ENCODE measurements at regions of chr17 and their contacts with region 1.

Region 1: GRCh38 chr17:58587702-58588254 is 73.3 kb upstream of the MTMR4 start:
- DNase-seq: peak; percentile 84
- ATAC-seq: peak; percentile 97
- H3K4me3 ChIP-seq: no peak overlapping the region
- H3K27ac ChIP-seq: no peak overlapping the region
- H3K4me1 ChIP-seq: no peaks in the 10 kb centered on the region
- H3K27me3 ChIP-seq: 0 out of 2 replicates have a peak, but pooled peaks cover 4% of the 10 kb centered on the region
- CTCF ChIP-seq: peak; percentile 98

Region 2: GRCh38 chr17:58658804-58659713 is 71.3 kb after region 1 on chr17:
- CTCF ChIA-PET with region 1: no interaction called
- POLR2A ChIA-PET with region 1: no interaction called
- intact Hi-C with region 1: loop called (anchors 1 kb)
- DNase-seq: peak; percentile 98
- ATAC-seq: peak; percentile 91
- H3K4me3 ChIP-seq: peak overlapping the region; percentile 56
- H3K27ac ChIP-seq: peak overlapping the region; percentile 89
- H3K4me1 ChIP-seq: 0 out of 2 replicates have a peak, but pooled peaks cover 8% of the 10 kb centered on the region
- H3K27me3 ChIP-seq: no peaks in the 10 kb centered on the region
- CTCF ChIP-seq: no peak

Region 3: DNA sequence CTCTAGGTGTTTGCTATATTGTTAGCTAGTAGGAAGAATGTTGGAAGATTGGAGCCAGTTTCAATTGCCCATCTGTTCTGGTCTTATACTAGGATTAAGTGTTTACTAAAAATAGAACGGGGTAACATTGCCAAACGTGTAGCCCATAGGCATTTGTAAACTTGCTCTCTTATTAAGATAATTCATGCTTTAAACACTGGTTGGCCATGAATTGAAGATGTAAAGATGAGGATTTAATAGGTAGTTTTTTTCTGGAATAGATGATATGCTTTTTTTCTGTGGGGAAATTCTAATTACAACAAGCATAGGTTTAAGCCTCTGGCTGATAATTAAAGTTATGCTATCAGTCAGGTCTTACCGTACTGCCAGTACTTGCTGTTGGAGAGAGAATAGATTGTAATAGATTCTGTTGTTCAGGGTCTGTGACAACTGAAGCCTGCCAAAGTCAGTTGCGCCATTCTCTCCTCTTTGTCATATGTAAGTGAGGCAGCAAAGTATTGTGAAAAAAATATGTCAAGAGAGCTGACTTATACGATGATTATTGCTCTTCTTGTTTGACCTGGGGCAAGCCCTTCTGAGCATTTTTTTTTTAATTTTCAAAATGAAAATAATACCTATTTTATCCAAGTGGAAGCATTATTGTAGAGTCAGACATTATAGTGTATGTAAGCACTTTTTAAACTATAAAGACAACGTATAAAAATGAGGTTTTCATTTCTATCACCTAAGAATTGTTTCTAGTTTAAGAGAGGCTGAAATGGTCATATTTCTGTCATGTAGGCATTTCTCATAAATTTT is 234.9 kb after region 1 on chr17:
- CTCF ChIA-PET with region 1: no interaction called
- POLR2A ChIA-PET with region 1: no interaction called
- intact Hi-C with region 1: no loop called
- DNase-seq: no peak
- ATAC-seq: no peak
- H3K4me3 ChIP-seq: no peak overlapping the region
- H3K27ac ChIP-seq: no peak overlapping the region
- H3K4me1 ChIP-seq: no peaks in the 10 kb centered on the region
- H3K27me3 ChIP-seq: peaks cover 41% of the 10 kb centered on the region
- CTCF ChIP-seq: no peak

Region 4: DNA sequence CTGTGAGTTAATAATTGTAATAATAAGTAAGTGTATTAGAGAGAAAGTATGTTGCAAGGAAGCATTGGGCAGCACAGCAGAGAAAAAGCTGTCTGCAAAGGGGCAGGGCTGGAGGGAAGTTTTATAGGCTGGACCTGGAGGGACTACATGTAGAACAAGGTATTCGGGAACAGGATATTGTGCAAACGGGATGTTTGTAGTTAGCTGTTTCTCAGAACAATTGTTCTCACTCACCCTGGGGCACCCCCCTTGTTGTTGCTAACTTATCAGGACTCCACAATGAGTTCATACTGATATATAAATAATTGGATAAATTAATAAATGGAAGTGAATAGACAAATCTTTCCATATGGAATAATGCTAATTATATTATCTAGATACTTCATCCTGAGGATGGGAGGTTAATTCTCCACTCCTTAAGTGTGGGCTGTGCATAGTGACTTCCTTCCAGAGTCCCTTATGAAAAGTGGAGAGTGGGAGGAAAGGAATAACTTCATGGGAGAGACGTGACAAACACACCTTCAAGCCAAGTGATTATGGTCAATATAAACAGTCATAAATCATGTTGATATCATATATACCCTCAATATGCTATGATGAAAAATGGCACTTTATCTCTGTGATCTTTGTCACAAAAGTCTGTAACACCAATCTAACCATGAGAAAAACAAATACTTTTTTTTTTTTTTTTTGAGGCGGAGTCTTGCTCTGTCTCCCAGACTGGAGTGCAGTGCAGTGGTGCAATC is 253.2 kb after region 1 on chr17:
- CTCF ChIA-PET with region 1: no interaction called
- POLR2A ChIA-PET with region 1: no interaction called
- intact Hi-C with region 1: no loop called
- DNase-seq: peak; percentile 15
- ATAC-seq: no peak
- H3K4me3 ChIP-seq: no peak overlapping the region
- H3K27ac ChIP-seq: no peak overlapping the region
- H3K4me1 ChIP-seq: no peaks in the 10 kb centered on the region
- H3K27me3 ChIP-seq: peaks cover 34% of the 10 kb centered on the region
- CTCF ChIP-seq: no peak

Measured in PC-3 (cell line).